ENCODE measurements at regions of chr1 and their contacts with region 1.

Region 1: DNA sequence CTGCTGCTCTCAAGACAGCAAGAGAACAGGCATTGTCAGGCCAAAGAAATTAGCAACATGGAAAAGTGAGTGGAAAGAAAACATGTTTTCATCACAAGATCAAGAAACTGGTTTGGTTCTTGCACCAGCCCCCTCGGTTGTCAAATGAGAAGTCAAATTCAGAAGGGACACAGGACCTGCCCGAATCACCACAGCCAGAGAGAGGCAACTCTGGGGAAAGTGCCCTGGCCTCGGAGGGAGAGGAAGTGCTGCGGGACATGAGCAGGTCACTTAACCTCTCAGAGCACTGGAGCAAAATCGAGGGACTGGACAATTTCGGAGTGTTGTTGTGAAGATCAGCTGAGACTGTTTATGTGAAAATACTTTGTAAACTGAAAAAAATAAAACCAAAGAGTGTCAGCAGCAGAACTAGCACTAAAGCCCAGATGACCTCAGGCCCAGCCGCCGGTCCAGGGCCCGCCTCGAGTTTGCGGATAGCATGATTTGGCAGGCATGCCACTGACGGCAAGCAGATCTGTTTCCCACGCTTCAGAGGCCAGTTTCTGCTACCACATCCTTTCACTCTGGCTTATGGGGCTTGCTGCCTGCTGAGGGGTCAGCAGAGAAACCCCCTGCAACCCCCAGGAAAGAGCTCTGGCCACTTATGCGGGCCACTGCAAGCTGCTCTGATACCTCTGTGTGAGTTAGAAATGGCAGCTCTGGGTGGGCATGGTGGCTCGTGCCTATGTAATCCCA is 32.1 kb downstream of the CD247 start:
- DNase-seq: peak; percentile 62
- ATAC-seq: no peak
- H3K4me3 Mint-ChIP-seq: peak overlapping the region; percentile 56
- H3K27ac Mint-ChIP-seq: peak overlapping the region; percentile 93
- H3K4me1 Mint-ChIP-seq: peaks cover 94% of the 10 kb centered on the region
- H3K27me3 Mint-ChIP-seq: no peaks in the 10 kb centered on the region
- CTCF ChIP-seq: no peak

Region 2: DNA sequence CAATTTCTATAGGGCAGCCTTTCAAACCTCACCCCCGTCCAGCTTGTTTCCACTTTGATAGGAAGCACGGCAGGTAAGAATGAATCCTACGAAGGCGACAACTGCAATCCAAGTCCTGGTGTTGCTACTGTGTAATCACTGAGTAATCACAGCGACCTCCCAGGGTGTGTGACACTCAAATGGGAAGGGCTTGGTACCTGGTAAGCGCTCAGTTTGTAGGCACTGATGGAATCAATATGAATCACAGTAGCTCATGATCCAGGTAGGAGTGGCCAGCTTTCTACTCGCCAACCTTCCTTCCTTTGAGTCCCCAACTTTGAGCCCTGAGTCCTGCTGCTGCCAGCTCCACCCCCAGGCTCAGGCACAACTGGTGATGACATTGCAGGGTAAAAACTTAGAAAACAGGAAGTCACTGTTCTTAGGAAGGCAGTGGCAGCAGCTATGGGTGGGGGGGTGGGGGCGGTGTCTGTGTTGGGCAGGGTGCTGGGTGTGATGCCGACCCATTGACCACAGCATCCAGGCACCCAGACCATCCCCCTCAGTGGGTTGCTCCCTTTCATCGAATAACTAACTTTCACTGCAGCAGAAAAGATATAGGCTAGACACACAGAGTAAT is 38.6 kb before region 1 on chr1:
- CTCF ChIA-PET with region 1: interaction called, 4 read pairs
- POLR2A ChIA-PET with region 1: interaction called, 85 read pairs
- intact Hi-C with region 1: no loop called
- DNase-seq: peak; percentile 90
- ATAC-seq: peak; percentile 82
- H3K4me3 Mint-ChIP-seq: peak overlapping the region; percentile 65
- H3K27ac Mint-ChIP-seq: peak overlapping the region; percentile 91
- H3K4me1 Mint-ChIP-seq: peaks cover 82% of the 10 kb centered on the region
- H3K27me3 Mint-ChIP-seq: no peaks in the 10 kb centered on the region
- CTCF ChIP-seq: no peak

Region 3: DNA sequence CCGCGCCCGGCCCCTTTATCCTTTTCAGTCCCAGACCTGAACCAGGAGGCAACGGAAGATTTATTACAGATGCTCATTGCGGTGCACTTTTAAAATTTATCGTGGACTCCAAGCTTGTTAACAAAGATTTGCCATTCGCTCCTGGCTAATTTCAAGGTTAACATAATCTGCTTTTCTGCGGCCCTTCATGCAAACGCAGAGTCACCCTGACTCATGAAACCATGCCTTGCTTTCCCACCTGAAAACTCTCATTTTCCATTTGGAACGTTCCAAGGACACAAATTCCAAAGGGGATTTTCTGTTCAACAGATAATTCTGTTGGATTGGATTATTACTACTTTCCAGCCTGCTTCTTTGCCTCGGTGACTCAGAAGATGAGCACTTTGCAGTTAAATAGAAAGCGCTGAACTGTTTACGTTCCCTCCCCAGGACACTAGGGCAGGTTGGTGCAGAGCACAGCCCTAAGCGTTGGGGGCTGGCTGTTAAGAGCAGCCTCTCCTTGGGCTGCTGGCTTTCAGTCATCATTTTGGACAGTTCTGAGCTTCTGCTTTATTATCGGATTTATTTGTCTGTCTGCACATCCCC is 19.0 kb before region 1 on chr1:
- CTCF ChIA-PET with region 1: interaction called, 4 read pairs
- POLR2A ChIA-PET with region 1: interaction called, 12 read pairs
- intact Hi-C with region 1: no loop called
- DNase-seq: no peak
- ATAC-seq: peak; percentile 58
- H3K4me3 Mint-ChIP-seq: no peak overlapping the region
- H3K27ac Mint-ChIP-seq: peak overlapping the region; percentile 2
- H3K4me1 Mint-ChIP-seq: peaks cover 80% of the 10 kb centered on the region
- H3K27me3 Mint-ChIP-seq: no peaks in the 10 kb centered on the region
- CTCF ChIP-seq: no peak

Region 4: DNA sequence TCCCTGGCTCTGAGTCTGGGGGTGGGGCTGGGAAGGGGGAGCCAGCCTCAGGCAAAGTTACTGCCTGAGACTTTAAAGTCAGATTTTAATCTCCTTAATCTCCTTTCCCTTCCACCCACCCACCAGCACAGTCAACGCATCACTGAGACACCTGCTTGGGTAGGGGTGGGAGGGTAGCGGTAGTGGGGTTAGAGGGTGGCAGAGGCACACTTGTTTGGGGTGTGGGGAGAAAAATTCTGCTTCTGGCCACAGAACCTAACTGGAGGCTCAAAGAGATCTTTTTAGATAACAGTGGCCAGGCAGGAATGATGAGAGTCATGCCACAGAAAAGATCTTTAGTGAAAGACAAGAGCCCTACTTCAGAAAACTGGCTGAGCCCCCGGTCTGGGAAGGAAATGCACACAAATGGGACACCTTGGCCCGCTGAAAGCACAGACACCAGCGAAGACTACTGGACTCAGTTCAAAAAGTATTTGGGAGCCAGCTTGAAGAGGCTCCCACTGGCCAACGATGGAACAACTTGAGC is 12.0 kb before region 1 on chr1:
- CTCF ChIA-PET with region 1: interaction called, 12 read pairs
- POLR2A ChIA-PET with region 1: interaction called, 32 read pairs
- intact Hi-C with region 1: no loop called
- DNase-seq: peak; percentile 72
- ATAC-seq: peak; percentile 58
- H3K4me3 Mint-ChIP-seq: peak overlapping the region; percentile 59
- H3K27ac Mint-ChIP-seq: peak overlapping the region; percentile 86
- H3K4me1 Mint-ChIP-seq: peaks cover 88% of the 10 kb centered on the region
- H3K27me3 Mint-ChIP-seq: no peaks in the 10 kb centered on the region
- CTCF ChIP-seq: no peak

Region 5: GRCh38 chr1:167510244-167510643 is 24.0 kb after region 1 on chr1:
- CTCF ChIA-PET with region 1: interaction called, 18 read pairs
- POLR2A ChIA-PET with region 1: interaction called, 76 read pairs
- intact Hi-C with region 1: loop called (anchors 5 kb)
- DNase-seq: peak; percentile 33
- ATAC-seq: peak; percentile 25
- H3K4me3 Mint-ChIP-seq: peak overlapping the region; percentile 58
- H3K27ac Mint-ChIP-seq: peak overlapping the region; percentile 76
- H3K4me1 Mint-ChIP-seq: peaks cover 75% of the 10 kb centered on the region
- H3K27me3 Mint-ChIP-seq: no peaks in the 10 kb centered on the region
- CTCF ChIP-seq: no peak

Region 6: DNA sequence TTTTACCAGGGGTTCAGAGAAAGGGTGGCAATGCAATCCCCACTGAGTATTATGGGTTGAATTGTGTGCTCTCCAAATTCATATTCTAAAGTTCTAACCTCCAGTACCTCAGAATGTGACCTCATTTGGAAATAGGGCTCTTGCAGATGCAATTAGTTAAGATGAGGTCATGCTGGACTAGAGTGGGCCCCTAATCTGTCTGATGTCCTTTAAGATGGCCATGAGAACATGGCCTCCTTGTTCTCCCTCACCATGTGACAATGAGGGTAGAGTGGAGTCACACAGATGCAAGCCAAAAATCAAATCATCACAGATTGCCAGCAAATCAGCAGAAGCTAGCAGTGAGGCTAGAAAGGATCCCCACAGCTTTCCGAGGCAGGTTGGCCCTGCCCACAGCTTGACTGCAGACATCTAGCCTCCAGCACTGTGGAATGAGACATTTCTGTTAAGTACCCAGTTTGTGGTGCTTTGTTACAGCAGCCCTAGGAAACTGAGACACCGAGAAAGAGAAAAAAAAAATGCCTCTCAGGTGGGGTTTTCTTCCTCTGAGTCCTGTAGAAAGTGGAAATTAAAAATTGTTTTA is 92.8 kb after region 1 on chr1:
- CTCF ChIA-PET with region 1: no interaction called
- POLR2A ChIA-PET with region 1: no interaction called
- intact Hi-C with region 1: no loop called
- DNase-seq: no peak
- ATAC-seq: no peak
- H3K4me3 Mint-ChIP-seq: no peak overlapping the region
- H3K27ac Mint-ChIP-seq: no peak overlapping the region
- H3K4me1 Mint-ChIP-seq: no peaks in the 10 kb centered on the region
- H3K27me3 Mint-ChIP-seq: peaks cover 12% of the 10 kb centered on the region
- CTCF ChIP-seq: no peak

Measured in activated CD8-positive, alpha-beta T cell treated with anti-CD3 and anti-CD28 coated beads for 36 hours (primary cell).